ENCODE measurements at regions of chr14 and their contacts with region 1.

Region 1: DNA sequence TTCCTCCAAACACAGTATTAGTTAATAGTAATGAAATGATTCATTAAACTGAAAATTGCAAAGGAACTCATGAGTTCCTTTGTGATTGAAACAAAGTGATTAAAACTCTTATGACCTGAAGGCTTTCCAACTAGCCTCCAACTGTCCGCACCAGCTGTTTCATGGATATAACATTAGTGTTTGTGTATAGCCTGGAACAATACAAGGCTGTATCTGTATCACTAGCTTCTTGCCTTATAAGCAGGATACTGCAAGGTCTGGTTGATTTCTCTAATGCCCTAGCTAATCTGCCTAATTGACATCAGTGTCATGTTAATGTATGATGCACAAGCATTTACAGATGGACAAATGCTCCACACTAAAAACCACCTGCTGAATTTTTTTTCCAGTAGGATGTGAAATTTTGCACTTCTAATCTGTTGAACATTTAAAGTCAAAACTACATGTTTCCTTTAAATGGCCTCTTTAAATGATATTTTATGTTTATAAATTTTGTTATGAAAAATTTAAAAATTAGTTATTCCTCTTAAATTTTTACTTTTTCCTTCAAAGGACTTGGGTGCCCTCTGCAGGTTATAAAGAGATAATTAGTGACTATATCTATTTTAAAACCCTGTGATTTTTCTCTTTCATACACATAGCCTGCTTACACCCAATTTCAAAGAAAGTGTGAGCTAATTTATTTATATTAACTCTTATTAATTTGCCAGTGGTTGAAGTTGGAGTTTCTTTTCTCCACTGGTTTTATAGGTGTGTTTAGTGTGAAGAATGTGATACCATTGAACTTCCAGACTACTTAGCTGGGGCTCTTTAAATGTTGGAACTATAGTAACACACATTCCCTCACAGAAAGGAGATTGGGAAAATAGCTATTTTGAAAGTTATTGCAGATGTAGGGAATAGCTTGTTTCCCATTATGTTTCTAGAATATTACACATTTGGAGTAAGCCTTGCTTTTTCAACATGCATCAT is 25.4 kb downstream of the AP5M1 start:
- DNase-seq: no peak
- ATAC-seq: no peak
- H3K4me3 ChIP-seq: no peak overlapping the region
- H3K27ac ChIP-seq: no peak overlapping the region
- H3K4me1 ChIP-seq: peaks cover 27% of the 10 kb centered on the region
- H3K27me3 ChIP-seq: no peaks in the 10 kb centered on the region
- CTCF ChIP-seq: no peak
- EP300 ChIP-seq: no peak
- POLR2A ChIP-seq: no peak
- RAD21 ChIP-seq: no peak

Region 2: GRCh38 chr14:57199921-57200320 is 94.2 kb before region 1 on chr14:
- CTCF ChIA-PET with region 1: no interaction called
- POLR2A ChIA-PET with region 1: no interaction called
- in situ Hi-C with region 1: no loop called
- intact Hi-C with region 1: loop called (anchors 10 kb)
- DNase-seq: no peak
- ATAC-seq: no peak
- H3K4me3 ChIP-seq: no peak overlapping the region
- H3K27ac ChIP-seq: no peak overlapping the region
- H3K4me1 ChIP-seq: no peaks in the 10 kb centered on the region
- H3K27me3 ChIP-seq: no peaks in the 10 kb centered on the region
- CTCF ChIP-seq: no peak
- EP300 ChIP-seq: no peak
- POLR2A ChIP-seq: no peak
- RAD21 ChIP-seq: no peak

Region 3: GRCh38 chr14:57268161-57269069 is 25.7 kb before region 1 on chr14 and contains the starts of genes AP5M1 and EXOC5:
- CTCF ChIA-PET with region 1: no interaction called
- POLR2A ChIA-PET with region 1: interaction called, 3 read pairs
- in situ Hi-C with region 1: no loop called
- intact Hi-C with region 1: loop called (anchors 2 kb)
- DNase-seq: peak; percentile 86
- ATAC-seq: peak; percentile 95
- H3K4me3 ChIP-seq: peak within 1 kb of the TSS; percentile 63 to 94 (median 84)
- H3K27ac ChIP-seq: peak within 1 kb of the TSS; percentile 90
- H3K4me1 ChIP-seq: peaks cover 56% of the 10 kb centered on the region
- H3K27me3 ChIP-seq: no peaks in the 10 kb centered on the region; a peak in 1 of 5 replicates
- CTCF ChIP-seq: peak; percentile 25
- EP300 ChIP-seq: peak; percentile 12 to 38; a peak in 1 of 4 replicates
- POLR2A ChIP-seq: peak in 1 of 2 experiments; percentile 65; a peak in 2 of 4 replicates
- RAD21 ChIP-seq: peak; percentile 34; the same call in 1 of the 2 replicates
- total RNA-seq, gene AP5M1: 35.0 and 49.4 TPM in 2 replicates
- total RNA-seq, gene EXOC5: 43.8 and 76.6 TPM in 2 replicates